Activated B cell treated with CpG ODN at 0.5 μM for 24 hours (primary cell): ENCODE measurements at regions of chr4 and their contacts with region 1.

Region 1: GRCh38 chr4:152535903-152536544 is at the start of gene FBXW7:
- DNase-seq: peak; percentile 99
- ATAC-seq: peak; percentile 85
- H3K4me3 Mint-ChIP-seq: peak within 1 kb of the TSS; percentile 99
- H3K27ac Mint-ChIP-seq: peak within 1 kb of the TSS; percentile 98
- H3K4me1 Mint-ChIP-seq: peaks cover 72% of the 10 kb centered on the region
- H3K27me3 Mint-ChIP-seq: no peaks in the 10 kb centered on the region
- CTCF ChIP-seq: no peak
- total RNA-seq, gene FBXW7: 96.5 and 102 TPM in 2 replicates

Region 2: GRCh38 chr4:151099229-151099975 is 1436.6 kb before region 1 on chr4 and contains the start of gene RPS3A:
- CTCF ChIA-PET with region 1: no interaction called
- POLR2A ChIA-PET with region 1: no interaction called
- intact Hi-C with region 1: loop called (anchors 1 kb)
- DNase-seq: peak; percentile 99
- ATAC-seq: peak; percentile 94
- H3K4me3 Mint-ChIP-seq: peak within 1 kb of the TSS; percentile 99
- H3K27ac Mint-ChIP-seq: peak within 1 kb of the TSS; percentile 98
- H3K4me1 Mint-ChIP-seq: peaks cover 40% of the 10 kb centered on the region
- H3K27me3 Mint-ChIP-seq: peaks cover 4% of the 10 kb centered on the region
- CTCF ChIP-seq: peak; percentile 88
- total RNA-seq, gene RPS3A: 3,089 and 3,656 TPM in 2 replicates

Region 3: DNA sequence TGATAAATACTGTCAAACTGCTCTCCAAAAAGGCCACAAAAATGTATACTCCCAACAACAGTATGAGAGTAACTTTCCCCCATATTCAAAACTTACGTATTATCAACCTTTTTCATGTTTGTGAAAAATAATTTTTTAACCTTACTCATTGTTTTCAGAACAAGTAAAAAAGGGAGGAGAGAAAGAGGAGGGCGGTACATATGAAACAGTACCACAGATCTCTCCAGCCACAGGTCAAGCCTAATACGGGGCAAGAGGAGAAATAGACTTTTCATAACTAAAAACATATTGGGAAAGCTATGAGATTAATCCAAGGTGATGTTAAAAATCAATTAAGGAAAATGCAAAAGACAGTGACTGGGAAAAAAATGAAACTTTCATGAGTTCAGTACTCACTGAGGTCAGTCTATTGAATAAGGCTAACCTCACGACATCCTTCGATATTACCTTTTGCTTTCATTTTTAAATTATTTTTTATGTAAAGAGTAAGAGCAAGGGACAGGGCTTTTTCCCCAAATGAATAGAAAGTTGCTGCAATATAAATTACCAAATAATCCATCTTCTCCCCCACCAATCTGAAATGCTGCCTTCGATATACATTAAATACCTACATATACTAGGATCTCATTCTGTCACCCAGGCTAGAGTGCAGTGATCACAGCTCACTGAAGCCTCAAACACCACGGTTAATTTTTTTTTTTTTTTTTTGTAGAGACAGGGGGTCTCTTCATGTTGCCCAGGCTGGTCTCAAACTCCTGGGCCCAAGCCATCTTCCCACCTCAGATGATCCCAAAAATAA is 25.5 kb before region 1 on chr4:
- CTCF ChIA-PET with region 1: no interaction called
- POLR2A ChIA-PET with region 1: interaction called, 11 read pairs
- intact Hi-C with region 1: no loop called
- DNase-seq: no peak
- ATAC-seq: no peak
- H3K4me3 Mint-ChIP-seq: peak overlapping the region; percentile 52
- H3K27ac Mint-ChIP-seq: peak overlapping the region; percentile 68
- H3K4me1 Mint-ChIP-seq: peaks cover 61% of the 10 kb centered on the region
- H3K27me3 Mint-ChIP-seq: no peaks in the 10 kb centered on the region
- CTCF ChIP-seq: no peak

Region 4: DNA sequence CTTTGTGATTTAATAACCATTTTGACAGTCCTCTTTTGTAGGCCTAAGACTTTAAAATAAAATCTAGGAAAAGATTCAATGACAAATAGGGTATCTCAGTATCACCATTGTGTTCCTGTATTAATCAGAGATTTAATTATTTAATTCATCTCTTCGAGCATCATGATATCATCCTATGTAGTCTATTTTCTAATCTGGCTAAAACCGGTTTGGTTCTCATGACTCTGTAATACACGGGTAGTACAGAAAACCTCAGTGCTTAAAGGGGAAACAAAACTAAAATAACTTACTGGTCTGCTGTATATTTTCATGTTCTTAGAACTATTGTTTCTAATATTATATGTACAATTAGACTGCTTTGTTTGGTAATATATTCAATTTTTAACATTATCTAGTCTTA is 23.6 kb after region 1 on chr4:
- CTCF ChIA-PET with region 1: no interaction called
- POLR2A ChIA-PET with region 1: interaction called, 136 read pairs
- intact Hi-C with region 1: no loop called
- DNase-seq: no peak
- ATAC-seq: peak; percentile 33
- H3K4me3 Mint-ChIP-seq: no peak overlapping the region
- H3K27ac Mint-ChIP-seq: peak overlapping the region; percentile 31
- H3K4me1 Mint-ChIP-seq: peaks cover 47% of the 10 kb centered on the region
- H3K27me3 Mint-ChIP-seq: no peaks in the 10 kb centered on the region
- CTCF ChIP-seq: no peak

Region 5: GRCh38 chr4:152640058-152640833 is 104.2 kb after region 1 on chr4:
- CTCF ChIA-PET with region 1: interaction called, 6 read pairs
- POLR2A ChIA-PET with region 1: interaction called, 34 read pairs
- intact Hi-C with region 1: loop called (anchors 1 kb)
- DNase-seq: no peak
- ATAC-seq: no peak
- H3K4me3 Mint-ChIP-seq: no peak overlapping the region
- H3K27ac Mint-ChIP-seq: peak overlapping the region; percentile 63
- H3K4me1 Mint-ChIP-seq: peaks cover 69% of the 10 kb centered on the region
- H3K27me3 Mint-ChIP-seq: no peaks in the 10 kb centered on the region
- CTCF ChIP-seq: peak; percentile 85

Region 6: GRCh38 chr4:152708362-152708761 is 172.3 kb after region 1 on chr4:
- CTCF ChIA-PET with region 1: no interaction called
- POLR2A ChIA-PET with region 1: no interaction called
- intact Hi-C with region 1: no loop called
- DNase-seq: no peak
- ATAC-seq: no peak
- H3K4me3 Mint-ChIP-seq: no peak overlapping the region
- H3K27ac Mint-ChIP-seq: no peak overlapping the region
- H3K4me1 Mint-ChIP-seq: peaks cover 16% of the 10 kb centered on the region
- H3K27me3 Mint-ChIP-seq: no peaks in the 10 kb centered on the region
- CTCF ChIP-seq: no peak

Region 7: DNA sequence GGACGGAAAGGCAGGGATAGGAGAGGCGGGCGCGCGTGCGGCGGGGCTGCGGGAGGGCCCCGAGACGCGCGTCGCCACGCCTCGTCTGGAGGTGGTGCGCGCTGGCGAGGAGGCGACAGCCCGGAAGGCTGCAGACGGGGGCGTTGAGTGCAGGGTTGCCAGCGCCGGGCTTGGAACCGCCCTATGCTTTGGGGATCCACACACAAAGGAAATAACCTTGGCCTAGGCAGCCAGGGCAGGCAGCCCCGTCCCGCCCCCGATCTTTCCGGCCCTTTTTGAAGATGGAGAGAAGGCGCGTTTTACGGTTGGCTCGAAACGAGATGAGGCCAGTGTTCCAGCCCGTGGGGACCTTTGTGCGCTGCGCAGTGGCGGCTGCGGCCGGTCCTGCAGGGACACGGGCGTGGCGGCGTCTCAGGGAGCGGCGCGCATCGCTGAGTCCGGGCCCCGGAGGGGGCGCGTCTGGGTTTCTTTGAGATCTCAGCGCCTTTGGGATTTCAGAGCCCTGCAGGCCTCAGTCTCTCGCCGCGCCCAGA is 617.4 kb after region 1 on chr4:
- CTCF ChIA-PET with region 1: no interaction called
- POLR2A ChIA-PET with region 1: no interaction called
- intact Hi-C with region 1: loop called (anchors 1 kb)
- DNase-seq: peak; percentile 63
- ATAC-seq: peak; percentile 76
- H3K4me3 Mint-ChIP-seq: peak overlapping the region; percentile 87
- H3K27ac Mint-ChIP-seq: peak overlapping the region; percentile 85
- H3K4me1 Mint-ChIP-seq: peaks cover 35% of the 10 kb centered on the region
- H3K27me3 Mint-ChIP-seq: peaks cover 30% of the 10 kb centered on the region
- CTCF ChIP-seq: no peak